B cell (primary cell): ENCODE measurements at regions of chr9 and their contacts with region 1.

Region 1: GRCh38 chr9:125631391-125632085 is 75.5 kb downstream of the MAPKAP1 start:
- DNase-seq: peak; percentile 58
- ATAC-seq: no peak
- H3K4me3 ChIP-seq: no peak overlapping the region
- H3K4me3 Mint-ChIP-seq: peak overlapping the region; percentile 72
- H3K27ac ChIP-seq: peak overlapping the region in 1 of 2 donors; percentile 26
- H3K27ac Mint-ChIP-seq: peak overlapping the region; percentile 76
- H3K4me1 ChIP-seq: peaks cover 77 to 78% of the 10 kb centered on the region in 2 donors
- H3K4me1 Mint-ChIP-seq: peaks cover 78% of the 10 kb centered on the region
- H3K27me3 ChIP-seq: no peaks in the 10 kb centered on the region
- H3K27me3 Mint-ChIP-seq: no peaks in the 10 kb centered on the region
- CTCF ChIP-seq: peak; percentile 74

Region 2: DNA sequence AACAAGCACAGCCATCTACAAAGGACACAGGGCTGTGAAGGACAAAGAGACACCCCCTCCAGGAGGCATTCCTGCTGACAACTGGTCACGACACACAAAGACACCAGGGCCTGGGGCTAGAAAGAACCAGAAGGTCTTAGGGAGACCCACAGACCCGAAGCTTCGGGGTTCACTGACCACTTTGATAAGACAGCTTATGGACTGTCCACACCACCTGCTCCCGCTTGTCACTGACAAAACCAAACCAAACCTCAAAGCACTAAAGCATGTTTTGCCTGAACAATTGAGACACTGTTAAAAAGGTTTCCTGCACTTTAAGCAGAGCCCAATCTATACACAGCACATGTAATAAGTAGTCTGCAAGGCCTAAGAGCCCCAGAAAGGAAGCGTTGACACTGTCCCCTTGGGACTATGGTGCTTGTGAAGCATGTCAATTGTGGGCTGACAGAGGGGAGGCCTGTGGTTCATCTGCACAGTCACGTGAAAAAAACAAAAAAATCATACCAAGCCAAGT is 184.9 kb before region 1 on chr9:
- CTCF ChIA-PET with region 1: no interaction called
- POLR2A ChIA-PET with region 1: no interaction called
- intact Hi-C with region 1: loop called (anchors 2 kb)
- DNase-seq: peak; percentile 94
- ATAC-seq: peak; percentile 100
- H3K4me3 ChIP-seq: peak overlapping the region in 1 of 5 experiments; percentile 14
- H3K4me3 Mint-ChIP-seq: peak overlapping the region; percentile 71
- H3K27ac ChIP-seq: peak overlapping the region in 1 of 2 donors; percentile 11
- H3K27ac Mint-ChIP-seq: peak overlapping the region; percentile 83
- H3K4me1 ChIP-seq: peaks cover 35 to 43% of the 10 kb centered on the region in 2 donors
- H3K4me1 Mint-ChIP-seq: peaks cover 43% of the 10 kb centered on the region
- H3K27me3 ChIP-seq: no peaks in the 10 kb centered on the region
- H3K27me3 Mint-ChIP-seq: no peaks in the 10 kb centered on the region
- CTCF ChIP-seq: no peak

Region 3: GRCh38 chr9:125460840-125461635 is 170.5 kb before region 1 on chr9:
- CTCF ChIA-PET with region 1: no interaction called
- POLR2A ChIA-PET with region 1: no interaction called
- intact Hi-C with region 1: no loop called
- DNase-seq: no peak
- ATAC-seq: no peak
- H3K4me3 ChIP-seq: no peak overlapping the region
- H3K4me3 Mint-ChIP-seq: no peak overlapping the region
- H3K27ac ChIP-seq: no peak overlapping the region
- H3K27ac Mint-ChIP-seq: no peak overlapping the region
- H3K4me1 ChIP-seq: no peaks in the 10 kb centered on the region
- H3K4me1 Mint-ChIP-seq: no peaks in the 10 kb centered on the region
- H3K27me3 ChIP-seq: no peaks in the 10 kb centered on the region
- H3K27me3 Mint-ChIP-seq: no peaks in the 10 kb centered on the region
- CTCF ChIP-seq: no peak

Region 4: DNA sequence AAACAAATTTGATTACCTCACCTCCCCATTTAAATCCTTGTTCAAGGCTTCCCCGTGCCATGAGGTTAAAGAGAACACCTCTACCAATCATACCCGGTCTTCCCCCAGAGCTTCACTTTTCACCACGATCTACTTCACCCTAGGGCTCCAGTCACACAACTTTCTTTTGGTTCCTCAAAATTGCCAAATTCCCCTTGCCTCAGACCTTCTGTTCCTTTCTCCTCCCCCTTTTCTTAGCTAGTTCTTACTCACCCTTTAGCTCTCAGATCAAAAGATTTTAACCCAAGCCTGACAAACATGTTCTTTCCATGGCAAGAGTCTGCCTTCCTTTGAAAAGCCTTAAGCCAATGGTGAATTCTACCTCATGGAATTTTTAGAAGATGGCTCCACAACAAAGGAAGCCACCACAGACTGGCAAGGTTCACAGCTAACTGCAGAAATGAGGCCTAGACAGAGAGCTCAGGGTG is 18.8 kb after region 1 on chr9:
- CTCF ChIA-PET with region 1: interaction called, 18 read pairs
- POLR2A ChIA-PET with region 1: interaction called, 4 read pairs
- intact Hi-C with region 1: loop called (anchors 1 kb)
- DNase-seq: peak; percentile 84
- ATAC-seq: peak; percentile 88
- H3K4me3 ChIP-seq: peak overlapping the region in 4 of 5 experiments; percentile 26 to 55 (median 28)
- H3K4me3 Mint-ChIP-seq: peak overlapping the region; percentile 73
- H3K27ac ChIP-seq: peak overlapping the region; percentile 81 to 95
- H3K27ac Mint-ChIP-seq: peak overlapping the region; percentile 88
- H3K4me1 ChIP-seq: peaks cover 70 to 78% of the 10 kb centered on the region in 2 donors
- H3K4me1 Mint-ChIP-seq: peaks cover 80% of the 10 kb centered on the region
- H3K27me3 ChIP-seq: no peaks in the 10 kb centered on the region
- H3K27me3 Mint-ChIP-seq: no peaks in the 10 kb centered on the region
- CTCF ChIP-seq: no peak

Region 5: GRCh38 chr9:125663127-125663526 is 31.6 kb after region 1 on chr9:
- CTCF ChIA-PET with region 1: no interaction called
- POLR2A ChIA-PET with region 1: no interaction called
- intact Hi-C with region 1: no loop called
- DNase-seq: no peak
- ATAC-seq: no peak
- H3K4me3 ChIP-seq: no peak overlapping the region
- H3K4me3 Mint-ChIP-seq: no peak overlapping the region
- H3K27ac ChIP-seq: no peak overlapping the region
- H3K27ac Mint-ChIP-seq: no peak overlapping the region
- H3K4me1 ChIP-seq: peaks cover 0 to 3% of the 10 kb centered on the region in 2 donors
- H3K4me1 Mint-ChIP-seq: peaks cover 6% of the 10 kb centered on the region
- H3K27me3 ChIP-seq: no peaks in the 10 kb centered on the region
- H3K27me3 Mint-ChIP-seq: no peaks in the 10 kb centered on the region
- CTCF ChIP-seq: no peak

Region 6: DNA sequence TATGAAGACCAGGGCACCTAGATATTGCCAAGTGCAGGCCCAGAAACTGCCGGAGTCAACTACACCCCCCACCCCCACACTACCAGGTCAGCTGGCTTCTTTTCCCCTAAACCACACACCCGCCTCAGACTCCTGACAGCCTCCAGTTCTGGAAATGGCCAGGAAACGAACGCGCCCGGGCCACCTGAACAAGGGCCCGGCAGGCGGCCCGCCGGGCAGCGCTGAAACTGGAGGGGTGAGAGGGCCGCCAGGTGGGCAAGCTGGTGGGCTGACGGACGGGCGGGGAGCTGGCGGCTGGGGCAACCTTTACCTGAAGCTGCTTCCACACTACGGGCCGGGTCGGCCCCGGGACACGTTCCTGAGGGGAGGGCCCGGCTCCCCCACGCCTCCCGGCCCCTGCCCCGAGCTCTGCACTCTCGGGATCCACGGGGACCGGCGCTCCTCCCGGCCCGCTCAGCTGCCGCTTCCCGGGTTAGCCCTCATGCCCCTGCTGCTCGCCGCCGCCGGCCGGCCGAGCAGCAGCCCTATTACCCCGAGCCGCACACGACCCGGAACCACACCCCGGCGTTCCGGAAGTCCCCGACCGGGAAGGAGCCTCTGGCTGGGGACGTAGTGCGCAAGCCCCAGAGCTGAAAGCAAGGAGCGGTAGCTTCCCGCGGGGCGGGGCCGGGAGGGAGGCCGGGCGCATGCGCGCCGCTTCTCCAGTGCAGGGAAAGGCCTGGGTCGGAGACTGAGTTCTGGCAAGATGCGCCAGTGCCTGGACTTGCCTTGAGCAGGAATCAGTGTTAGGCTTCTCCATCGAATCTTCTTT is 75.3 kb after region 1 on chr9 and contains the start of gene MAPKAP1:
- CTCF ChIA-PET with region 1: interaction called, 12 read pairs
- POLR2A ChIA-PET with region 1: interaction called, 6 read pairs
- intact Hi-C with region 1: loop called (anchors 5 kb)
- DNase-seq: peak; percentile 92
- ATAC-seq: peak; percentile 99
- H3K4me3 ChIP-seq: peak within 1 kb of the TSS; percentile 73 to 93 (median 81)
- H3K4me3 Mint-ChIP-seq: peak within 1 kb of the TSS; percentile 89
- H3K27ac ChIP-seq: peak within 1 kb of the TSS; percentile 75 to 84
- H3K27ac Mint-ChIP-seq: peak within 1 kb of the TSS; percentile 88
- H3K4me1 ChIP-seq: peaks cover 20 to 22% of the 10 kb centered on the region in 2 donors
- H3K4me1 Mint-ChIP-seq: peaks cover 47% of the 10 kb centered on the region
- H3K27me3 ChIP-seq: peaks cover 0 to 2% (median 0%) of the 10 kb centered on the region in 4 experiments
- H3K27me3 Mint-ChIP-seq: peaks cover 3% of the 10 kb centered on the region
- CTCF ChIP-seq: no peak
- total RNA-seq, gene MAPKAP1: 62.4 and 72.1 TPM in 2 replicates